ENCODE measurements at regions of chr1 and their contacts with region 1.

Region 1: GRCh38 chr1:33181921-33182341 is at the start of gene TRIM62:
- DNase-seq: peak; percentile 94
- H3K4me3 Mint-ChIP-seq: peak within 1 kb of the TSS; percentile 91
- H3K27ac Mint-ChIP-seq: peak within 1 kb of the TSS; percentile 80
- H3K4me1 Mint-ChIP-seq: peaks cover 25% of the 10 kb centered on the region
- H3K27me3 Mint-ChIP-seq: peaks cover 32% of the 10 kb centered on the region
- total RNA-seq, gene TRIM62: 3.1 and 3.2 TPM in 2 replicates

Region 2: GRCh38 chr1:33256701-33257399 is 74.9 kb after region 1 on chr1:
- intact Hi-C with region 1: loop called (anchors 2 kb)
- DNase-seq: peak; percentile 85
- H3K4me3 Mint-ChIP-seq: peak overlapping the region; percentile 96
- H3K27ac Mint-ChIP-seq: peak overlapping the region; percentile 98
- H3K4me1 Mint-ChIP-seq: peaks cover 17% of the 10 kb centered on the region
- H3K27me3 Mint-ChIP-seq: peaks cover 3% of the 10 kb centered on the region

Region 3: GRCh38 chr1:33349778-33350610 is 168.1 kb after region 1 on chr1:
- intact Hi-C with region 1: loop called (anchors 5 kb)
- DNase-seq: peak; percentile 95
- H3K4me3 Mint-ChIP-seq: peak overlapping the region; percentile 95
- H3K27ac Mint-ChIP-seq: peak overlapping the region; percentile 90
- H3K4me1 Mint-ChIP-seq: peaks cover 39% of the 10 kb centered on the region
- H3K27me3 Mint-ChIP-seq: peaks cover 2% of the 10 kb centered on the region